Gastrocnemius medialis (tissue), 4 donors: ENCODE measurements at regions of chr9 and their contacts with region 1.

Region 1: DNA sequence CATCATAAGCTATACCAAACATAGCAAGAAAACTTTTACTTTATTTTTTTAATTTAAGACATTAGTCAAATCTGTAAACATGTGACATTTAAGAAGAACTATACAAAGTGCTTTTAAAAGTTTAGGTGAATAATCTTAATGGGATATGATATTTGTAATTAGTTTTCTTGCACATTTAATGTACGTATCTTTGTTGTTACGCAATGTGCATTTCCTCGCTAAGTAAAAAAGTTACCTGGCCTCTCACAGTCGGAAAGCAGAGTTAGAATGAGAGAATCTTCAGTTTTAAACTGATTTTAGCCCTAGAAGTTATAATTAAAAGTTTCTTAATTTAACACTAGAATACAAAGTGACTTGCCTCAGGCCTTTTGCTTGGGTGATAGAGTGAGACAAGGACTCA is 589.8 kb downstream of the DMRTA1 start:
- DNase-seq: no peak
- ATAC-seq: no peak
- H3K4me3 ChIP-seq: no peak overlapping the region
- H3K27ac ChIP-seq: no peak overlapping the region
- H3K4me1 ChIP-seq: no peaks in the 10 kb centered on the region
- H3K27me3 ChIP-seq: no peaks in the 10 kb centered on the region
- CTCF ChIP-seq: no peak
- POLR2A ChIP-seq: no peak

Region 2: GRCh38 chr9:23088932-23089366 is 52.5 kb after region 1 on chr9:
- in situ Hi-C with region 1: loop called in 1 of 4 experiments (anchors 10 kb)
- intact Hi-C with region 1: no loop called
- DNase-seq: no peak
- ATAC-seq: no peak
- H3K4me3 ChIP-seq: no peak overlapping the region
- H3K27ac ChIP-seq: no peak overlapping the region
- H3K4me1 ChIP-seq: no peaks in the 10 kb centered on the region
- H3K27me3 ChIP-seq: no peaks in the 10 kb centered on the region
- CTCF ChIP-seq: no peak
- POLR2A ChIP-seq: no peak